ENCODE measurements at regions of chr12 and their contacts with region 1.

Region 1: DNA sequence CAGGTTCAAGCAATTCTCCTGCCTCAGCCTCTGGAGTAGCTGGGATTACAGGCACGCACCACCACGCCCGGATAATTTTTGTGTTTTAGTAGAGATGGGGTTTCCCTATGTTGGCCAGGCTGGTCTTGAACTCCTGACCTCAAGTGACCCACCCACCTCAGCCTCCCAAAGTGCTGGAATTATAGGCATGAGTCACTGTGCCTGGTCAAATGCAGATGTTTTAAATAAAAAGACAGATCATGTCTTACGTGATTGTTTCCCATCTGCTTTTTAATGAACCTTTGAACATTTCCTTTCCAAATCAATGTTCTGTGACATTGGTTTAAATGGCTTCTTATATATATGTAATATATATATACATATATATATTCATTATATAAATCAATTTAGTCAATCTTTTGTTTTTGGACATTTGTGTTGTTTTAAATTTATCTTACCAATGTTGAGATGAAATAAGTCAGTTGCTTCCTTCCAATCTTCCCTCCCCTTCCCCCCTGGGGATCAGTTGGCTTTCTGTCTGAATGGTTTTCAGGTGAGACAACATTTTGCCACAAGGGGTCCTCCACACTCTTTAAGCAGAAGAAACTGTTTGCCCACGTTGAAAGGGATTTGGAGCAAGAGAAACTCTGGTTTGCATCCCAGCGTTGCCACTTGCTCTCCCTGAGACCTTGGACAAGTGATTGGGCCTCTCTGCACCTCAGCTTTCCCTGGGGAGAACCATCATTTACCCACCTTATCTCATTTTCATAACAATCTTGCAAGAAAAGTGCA is 47.6 kb upstream of the RBM19 start:
- DNase-seq: no peak
- H3K4me3 ChIP-seq: no peak overlapping the region
- H3K27ac ChIP-seq: no peak overlapping the region
- H3K4me1 ChIP-seq: no peaks in the 10 kb centered on the region
- H3K27me3 ChIP-seq: peaks cover 0 to 27% of the 10 kb centered on the region in 2 donors
- CTCF ChIP-seq: no peak
- POLR2A ChIP-seq: no peak

Region 2: GRCh38 chr12:113609692-113610469 is 403.9 kb before region 1 on chr12:
- intact Hi-C with region 1: no loop called
- DNase-seq: no peak
- H3K4me3 ChIP-seq: no peak overlapping the region
- H3K27ac ChIP-seq: no peak overlapping the region
- H3K4me1 ChIP-seq: no peaks in the 10 kb centered on the region
- H3K27me3 ChIP-seq: peaks cover 0 to 57% of the 10 kb centered on the region in 2 donors
- CTCF ChIP-seq: no peak
- POLR2A ChIP-seq: no peak

Region 3: DNA sequence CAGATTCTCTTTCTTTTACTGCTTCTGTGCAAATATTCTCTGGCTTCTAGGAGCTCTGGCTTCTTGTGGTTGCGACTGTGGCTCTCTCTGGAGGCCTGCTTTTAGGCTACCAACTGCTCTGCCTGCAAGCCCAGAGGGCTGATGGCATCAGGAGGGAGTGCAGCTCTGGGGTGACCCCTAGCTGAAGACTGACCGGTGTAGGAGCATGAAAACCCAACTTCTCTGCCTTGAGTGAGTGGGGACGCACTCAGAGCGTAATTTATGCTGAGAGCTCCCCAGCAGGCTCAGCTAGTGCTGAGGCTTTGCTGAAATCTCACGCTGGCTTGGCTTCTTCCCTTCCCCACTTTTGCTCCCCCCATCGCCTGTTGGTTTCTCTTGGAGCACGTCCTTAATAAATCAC is 17.7 kb before region 1 on chr12:
- intact Hi-C with region 1: no loop called
- DNase-seq: no peak
- H3K4me3 ChIP-seq: no peak overlapping the region
- H3K27ac ChIP-seq: no peak overlapping the region
- H3K4me1 ChIP-seq: no peaks in the 10 kb centered on the region
- H3K27me3 ChIP-seq: peaks cover 0 to 17% of the 10 kb centered on the region in 2 donors
- CTCF ChIP-seq: no peak
- POLR2A ChIP-seq: no peak

Region 4: GRCh38 chr12:114030451-114030850 is 16.7 kb after region 1 on chr12:
- intact Hi-C with region 1: loop called (anchors 1 kb)
- DNase-seq: no peak
- H3K4me3 ChIP-seq: no peak overlapping the region
- H3K27ac ChIP-seq: no peak overlapping the region
- H3K4me1 ChIP-seq: no peaks in the 10 kb centered on the region
- H3K27me3 ChIP-seq: peaks cover 0 to 26% of the 10 kb centered on the region in 2 donors
- CTCF ChIP-seq: no peak
- POLR2A ChIP-seq: no peak

Region 5: DNA sequence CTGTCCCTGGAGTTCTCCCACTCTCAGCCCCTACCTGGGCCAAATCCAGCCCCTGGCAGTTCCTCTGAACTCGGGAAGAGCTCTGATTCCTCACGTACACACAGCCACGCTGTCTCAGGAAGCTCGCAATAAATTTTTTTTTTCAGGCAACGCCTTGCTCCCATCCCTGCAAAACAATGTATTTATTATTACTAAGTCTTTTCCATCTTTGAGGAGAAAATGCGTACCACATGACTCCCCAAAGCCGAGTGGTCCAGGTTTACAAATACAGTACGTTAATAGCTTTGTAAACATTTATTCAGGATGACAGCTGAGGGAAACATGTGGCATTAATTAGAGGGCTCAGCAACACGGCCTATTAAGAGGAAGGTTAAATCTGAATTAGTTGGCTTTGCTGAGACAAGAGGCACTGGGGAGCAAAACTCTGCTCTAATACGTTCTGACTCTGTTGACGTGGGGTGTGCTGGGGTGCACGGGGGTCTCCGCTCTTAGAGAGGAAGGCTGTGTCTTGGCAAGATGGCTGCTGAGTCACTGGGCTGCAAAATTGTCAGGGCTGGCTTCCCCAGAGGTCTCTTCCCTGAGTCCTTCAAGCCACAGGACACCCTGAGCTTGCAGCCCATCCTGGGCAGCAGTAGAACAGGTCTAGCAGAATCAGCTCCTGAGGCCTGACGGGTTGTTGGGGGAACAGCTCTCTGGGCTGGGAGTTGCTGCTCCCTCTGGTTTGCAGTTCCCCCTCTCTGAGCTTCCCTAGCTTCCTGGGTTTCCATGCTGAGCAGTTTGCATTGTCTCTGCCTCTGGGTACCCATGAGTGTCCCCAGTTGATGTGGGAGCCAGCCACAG is 855.5 kb after region 1 on chr12:
- intact Hi-C with region 1: no loop called
- DNase-seq: no peak
- H3K4me3 ChIP-seq: no peak overlapping the region
- H3K27ac ChIP-seq: peak overlapping the region in 1 of 2 donors; percentile 25
- H3K4me1 ChIP-seq: no peaks in the 10 kb centered on the region
- H3K27me3 ChIP-seq: no peaks in the 10 kb centered on the region
- CTCF ChIP-seq: no peak
- POLR2A ChIP-seq: no peak